ENCODE measurements at regions of chr17 and their contacts with region 1.

Region 1: DNA sequence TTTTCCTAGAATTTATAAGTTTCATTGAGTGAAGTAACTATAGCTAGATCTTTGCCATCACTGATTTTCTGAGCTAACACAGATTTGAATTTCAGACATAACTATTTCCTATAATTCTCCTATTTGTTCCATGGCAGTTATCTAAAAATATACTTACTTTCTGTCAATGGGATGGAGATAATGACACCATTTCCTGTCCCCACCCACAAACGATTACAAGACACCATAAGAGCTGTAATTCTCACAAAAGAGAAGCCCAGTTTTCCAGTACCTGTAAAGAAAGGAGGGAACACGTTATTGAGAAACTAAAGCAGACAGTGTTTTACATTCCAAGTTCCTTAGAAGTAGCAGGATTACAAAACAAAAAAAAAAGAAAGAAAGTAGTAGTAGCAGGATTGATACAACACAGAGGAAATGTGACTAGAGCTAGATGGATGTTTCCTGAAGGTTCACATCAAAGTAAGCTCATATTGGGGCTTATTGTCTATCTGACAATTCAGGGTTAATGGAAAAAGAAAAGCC is 110.9 kb upstream of the TOB1 start:
- DNase-seq: peak; percentile 52
- H3K4me3 ChIP-seq: no peak overlapping the region
- H3K27ac ChIP-seq: peak overlapping the region; percentile 65
- H3K4me1 ChIP-seq: peaks cover 32% of the 10 kb centered on the region
- H3K27me3 ChIP-seq: no peaks in the 10 kb centered on the region
- CTCF ChIP-seq: no peak

Region 2: DNA sequence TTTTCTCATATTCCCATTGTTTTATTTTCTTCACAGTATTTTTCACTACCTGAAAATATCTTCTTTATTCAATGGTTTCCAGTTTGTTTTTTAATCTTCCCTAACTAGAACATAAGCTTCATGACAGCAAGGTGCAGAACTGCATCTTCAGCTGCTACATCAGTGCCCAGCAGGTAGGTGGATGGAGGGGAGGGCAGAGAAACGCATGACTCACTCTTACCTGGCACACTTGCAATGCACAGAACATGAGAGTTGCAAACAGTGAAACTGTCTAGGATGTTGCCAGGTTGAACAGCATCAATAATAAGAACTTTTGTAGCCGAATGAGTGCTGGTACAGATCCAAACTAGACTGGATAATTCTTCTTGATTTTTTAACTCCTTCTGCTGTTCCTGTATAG is 16.5 kb after region 1 on chr17:
- CTCF ChIA-PET with region 1: no interaction called
- POLR2A ChIA-PET with region 1: no interaction called
- intact Hi-C with region 1: loop called (anchors 2 kb)
- DNase-seq: no peak
- H3K4me3 ChIP-seq: no peak overlapping the region
- H3K27ac ChIP-seq: no peak overlapping the region
- H3K4me1 ChIP-seq: no peaks in the 10 kb centered on the region
- H3K27me3 ChIP-seq: no peaks in the 10 kb centered on the region
- CTCF ChIP-seq: no peak

Region 3: DNA sequence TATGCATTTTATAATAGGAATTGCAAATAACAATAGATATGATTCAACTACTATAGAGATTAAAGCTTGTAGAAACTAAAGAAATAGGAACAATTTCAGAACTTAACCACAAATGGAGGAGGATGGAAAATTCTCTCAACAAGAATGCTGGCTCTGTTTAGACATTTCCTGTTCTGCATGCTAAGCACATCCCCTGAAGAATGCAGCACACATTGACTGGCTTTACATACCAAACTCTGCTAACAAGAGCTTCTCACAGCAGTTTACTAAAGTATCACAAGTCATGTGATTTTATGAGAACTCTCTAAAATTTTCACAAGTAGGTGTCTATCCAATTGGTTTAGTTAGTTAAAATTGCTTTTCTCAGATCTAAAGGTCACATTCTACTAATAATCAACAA is 58.4 kb after region 1 on chr17:
- CTCF ChIA-PET with region 1: no interaction called
- POLR2A ChIA-PET with region 1: no interaction called
- intact Hi-C with region 1: loop called (anchors 10 kb)
- DNase-seq: peak; percentile 76
- H3K4me3 ChIP-seq: no peak overlapping the region
- H3K27ac ChIP-seq: peak overlapping the region; percentile 21
- H3K4me1 ChIP-seq: peaks cover 13% of the 10 kb centered on the region
- H3K27me3 ChIP-seq: no peaks in the 10 kb centered on the region
- CTCF ChIP-seq: no peak